CD4-positive, alpha-beta T cell (primary cell): ENCODE measurements at regions of chr12 and their contacts with region 1.

Region 1: GRCh38 chr12:3885277-3886094 is 12.3 kb upstream of the PARP11 start:
- DNase-seq: peak in 10 of 14 experiments; percentile 26 to 83 (median 43)
- ATAC-seq: peak; percentile 46
- H3K4me3 ChIP-seq: no peak overlapping the region
- H3K4me3 Mint-ChIP-seq: no peak overlapping the region
- H3K27ac ChIP-seq: no peak overlapping the region
- H3K27ac Mint-ChIP-seq: peak overlapping the region; percentile 38
- H3K4me1 ChIP-seq: peaks cover 10% of the 10 kb centered on the region
- H3K4me1 Mint-ChIP-seq: peaks cover 17% of the 10 kb centered on the region
- H3K27me3 ChIP-seq: no peaks in the 10 kb centered on the region
- H3K27me3 Mint-ChIP-seq: no peaks in the 10 kb centered on the region
- CTCF ChIP-seq: peak; percentile 97

Region 2: GRCh38 chr12:3456809-3457208 is 428.7 kb before region 1 on chr12:
- CTCF ChIA-PET with region 1: no interaction called
- POLR2A ChIA-PET with region 1: no interaction called
- intact Hi-C with region 1: no loop called
- DNase-seq: no peak
- ATAC-seq: no peak
- H3K4me3 ChIP-seq: no peak overlapping the region
- H3K4me3 Mint-ChIP-seq: no peak overlapping the region
- H3K27ac ChIP-seq: no peak overlapping the region
- H3K27ac Mint-ChIP-seq: no peak overlapping the region
- H3K4me1 ChIP-seq: no peaks in the 10 kb centered on the region
- H3K4me1 Mint-ChIP-seq: peaks cover 11% of the 10 kb centered on the region
- H3K27me3 ChIP-seq: peaks cover 4 to 9% of the 10 kb centered on the region in 2 experiments
- H3K27me3 Mint-ChIP-seq: peaks cover 50% of the 10 kb centered on the region
- CTCF ChIP-seq: no peak

Region 3: DNA sequence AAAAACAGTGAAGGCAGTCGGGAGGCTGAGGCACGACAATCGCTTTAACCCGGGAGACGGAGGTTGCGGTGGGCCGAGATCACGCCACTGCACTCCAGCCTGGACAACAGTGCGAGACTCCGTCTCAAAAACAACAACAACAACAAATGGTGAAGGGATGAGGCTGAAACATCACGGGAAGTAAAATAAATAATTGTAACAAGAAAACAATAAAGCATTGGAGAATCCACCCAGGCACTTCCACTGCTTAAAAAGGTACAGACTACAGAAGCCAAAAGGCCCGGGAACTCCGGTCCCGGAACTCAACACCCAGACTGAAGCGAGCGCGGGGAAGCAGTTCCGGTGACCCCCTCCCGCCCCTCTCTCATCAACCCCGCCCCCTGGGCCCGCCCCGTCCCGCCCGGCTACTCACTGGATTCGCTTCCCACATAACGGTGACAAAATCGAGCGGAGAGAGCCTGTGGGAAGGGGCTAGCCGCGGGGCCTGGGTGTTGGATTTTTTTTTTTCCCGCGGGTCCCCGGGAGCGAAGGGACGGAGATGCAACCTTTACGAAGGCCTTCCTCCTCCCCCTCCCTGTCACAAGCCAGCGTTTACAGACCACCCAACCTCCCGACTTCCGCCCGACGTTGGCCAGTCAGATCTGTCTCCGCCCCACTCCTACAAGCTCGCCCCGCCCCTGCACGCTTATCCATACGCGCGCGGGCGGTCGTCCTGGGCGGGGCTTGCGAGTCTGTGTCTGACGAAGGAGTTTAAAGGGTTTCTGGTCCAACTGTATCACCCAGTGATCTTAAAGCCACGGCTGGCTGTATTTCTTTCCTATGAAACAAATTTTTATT is 12.5 kb before region 1 on chr12 and contains the start of gene PARP11:
- CTCF ChIA-PET with region 1: interaction called, 6 read pairs
- POLR2A ChIA-PET with region 1: interaction called, 11 read pairs
- intact Hi-C with region 1: no loop called
- DNase-seq: peak; percentile 95 to 99 (median 98)
- ATAC-seq: peak; percentile 94
- H3K4me3 ChIP-seq: peak within 1 kb of the TSS; percentile 79
- H3K4me3 Mint-ChIP-seq: peak within 1 kb of the TSS; percentile 95
- H3K27ac ChIP-seq: peak within 1 kb of the TSS; percentile 88 to 97
- H3K27ac Mint-ChIP-seq: peak within 1 kb of the TSS; percentile 99
- H3K4me1 ChIP-seq: peaks cover 30% of the 10 kb centered on the region
- H3K4me1 Mint-ChIP-seq: peaks cover 59% of the 10 kb centered on the region
- H3K27me3 ChIP-seq: no peaks in the 10 kb centered on the region
- H3K27me3 Mint-ChIP-seq: no peaks in the 10 kb centered on the region
- CTCF ChIP-seq: no peak
- total RNA-seq, gene PARP11: 13.4 TPM

Region 4: DNA sequence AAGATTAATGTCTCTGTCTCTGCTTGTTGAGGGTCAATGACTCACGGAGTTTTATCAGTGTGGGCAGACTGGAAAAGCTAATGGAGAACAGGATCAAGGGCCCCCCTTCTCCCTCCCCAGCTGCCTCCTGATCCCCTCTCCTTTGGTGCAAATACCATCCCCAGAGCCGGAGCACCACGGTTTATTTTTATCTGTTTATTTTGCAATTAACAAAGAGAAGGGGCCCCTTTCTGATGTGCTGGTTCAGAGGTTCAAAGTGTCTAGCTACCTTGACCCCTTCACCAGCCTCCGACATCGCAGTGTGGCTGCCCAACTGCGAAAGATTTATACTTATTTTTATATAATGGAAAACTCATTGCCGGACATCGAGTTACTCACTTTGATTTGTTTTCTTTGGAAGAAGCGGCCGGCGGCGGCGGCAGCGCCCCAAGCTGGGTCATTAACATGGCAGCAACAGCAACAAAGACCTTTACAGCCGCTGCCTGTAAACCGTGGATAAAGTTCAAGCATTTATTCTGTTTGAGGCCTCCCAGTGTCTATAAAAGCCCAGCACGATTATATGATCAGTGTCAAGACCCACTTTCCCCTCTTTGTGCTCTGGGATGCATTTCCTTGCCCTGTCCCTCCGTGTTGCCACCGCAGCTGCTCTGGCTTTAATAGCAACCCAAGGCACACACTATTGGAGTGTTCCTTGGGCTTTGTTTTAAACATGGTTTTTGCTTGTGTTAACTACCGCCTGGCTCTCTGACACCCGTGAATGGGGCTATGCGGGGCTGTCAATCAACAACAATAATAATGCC is 35.1 kb after region 1 on chr12:
- CTCF ChIA-PET with region 1: no interaction called
- POLR2A ChIA-PET with region 1: no interaction called
- intact Hi-C with region 1: no loop called
- DNase-seq: no peak
- ATAC-seq: no peak
- H3K4me3 ChIP-seq: no peak overlapping the region
- H3K4me3 Mint-ChIP-seq: no peak overlapping the region
- H3K27ac ChIP-seq: no peak overlapping the region
- H3K27ac Mint-ChIP-seq: no peak overlapping the region
- H3K4me1 ChIP-seq: peaks cover 11% of the 10 kb centered on the region
- H3K4me1 Mint-ChIP-seq: peaks cover 32% of the 10 kb centered on the region
- H3K27me3 ChIP-seq: no peaks in the 10 kb centered on the region
- H3K27me3 Mint-ChIP-seq: no peaks in the 10 kb centered on the region
- CTCF ChIP-seq: no peak

Region 5: GRCh38 chr12:3947781-3948180 is 62.3 kb after region 1 on chr12:
- CTCF ChIA-PET with region 1: interaction called, 10 read pairs
- POLR2A ChIA-PET with region 1: interaction called, 6 read pairs
- intact Hi-C with region 1: no loop called
- DNase-seq: peak in 3 of 14 experiments; percentile 74 to 84 (median 78)
- ATAC-seq: peak; percentile 77
- H3K4me3 ChIP-seq: no peak overlapping the region
- H3K4me3 Mint-ChIP-seq: peak overlapping the region; percentile 52
- H3K27ac ChIP-seq: peak overlapping the region; percentile 84 to 86
- H3K27ac Mint-ChIP-seq: peak overlapping the region; percentile 98
- H3K4me1 ChIP-seq: peaks cover 53% of the 10 kb centered on the region
- H3K4me1 Mint-ChIP-seq: peaks cover 67% of the 10 kb centered on the region
- H3K27me3 ChIP-seq: no peaks in the 10 kb centered on the region
- H3K27me3 Mint-ChIP-seq: no peaks in the 10 kb centered on the region
- CTCF ChIP-seq: no peak

Region 6: GRCh38 chr12:3998968-3999826 is 113.7 kb after region 1 on chr12:
- CTCF ChIA-PET with region 1: interaction called, 10 read pairs
- POLR2A ChIA-PET with region 1: interaction called, 4 read pairs
- intact Hi-C with region 1: loop called (anchors 1 kb)
- DNase-seq: peak in 8 of 14 experiments; percentile 11 to 68 (median 30)
- ATAC-seq: peak; percentile 87
- H3K4me3 ChIP-seq: no peak overlapping the region
- H3K4me3 Mint-ChIP-seq: no peak overlapping the region
- H3K27ac ChIP-seq: no peak overlapping the region
- H3K27ac Mint-ChIP-seq: peak overlapping the region; percentile 69
- H3K4me1 ChIP-seq: peaks cover 19% of the 10 kb centered on the region
- H3K4me1 Mint-ChIP-seq: peaks cover 48% of the 10 kb centered on the region
- H3K27me3 ChIP-seq: no peaks in the 10 kb centered on the region
- H3K27me3 Mint-ChIP-seq: no peaks in the 10 kb centered on the region
- CTCF ChIP-seq: no peak

Region 7: GRCh38 chr12:4107436-4107878 is 222.0 kb after region 1 on chr12:
- CTCF ChIA-PET with region 1: interaction called, 3 read pairs
- POLR2A ChIA-PET with region 1: no interaction called
- intact Hi-C with region 1: loop called (anchors 1 to 5 kb)
- DNase-seq: peak; percentile 30 to 92 (median 54)
- ATAC-seq: peak; percentile 99
- H3K4me3 ChIP-seq: no peak overlapping the region
- H3K4me3 Mint-ChIP-seq: no peak overlapping the region
- H3K27ac ChIP-seq: no peak overlapping the region
- H3K27ac Mint-ChIP-seq: peak overlapping the region; percentile 71
- H3K4me1 ChIP-seq: peaks cover 10% of the 10 kb centered on the region
- H3K4me1 Mint-ChIP-seq: peaks cover 12% of the 10 kb centered on the region
- H3K27me3 ChIP-seq: no peaks in the 10 kb centered on the region
- H3K27me3 Mint-ChIP-seq: no peaks in the 10 kb centered on the region
- CTCF ChIP-seq: peak; percentile 81

Region 8: GRCh38 chr12:4269279-4269991 is 383.9 kb after region 1 on chr12:
- CTCF ChIA-PET with region 1: interaction called, 4 read pairs
- POLR2A ChIA-PET with region 1: interaction called, 10 read pairs
- intact Hi-C with region 1: no loop called
- DNase-seq: peak; percentile 85 to 96 (median 90)
- ATAC-seq: peak; percentile 32
- H3K4me3 ChIP-seq: peak overlapping the region; percentile 95
- H3K4me3 Mint-ChIP-seq: peak overlapping the region; percentile 96
- H3K27ac ChIP-seq: peak overlapping the region; percentile 79 to 99
- H3K27ac Mint-ChIP-seq: peak overlapping the region; percentile 99
- H3K4me1 ChIP-seq: peaks cover 46% of the 10 kb centered on the region
- H3K4me1 Mint-ChIP-seq: peaks cover 31% of the 10 kb centered on the region
- H3K27me3 ChIP-seq: no peaks in the 10 kb centered on the region
- H3K27me3 Mint-ChIP-seq: peaks cover 6% of the 10 kb centered on the region
- CTCF ChIP-seq: no peak